Activated naive CD8-positive, alpha-beta T cell treated with anti-CD3 and anti-CD28 coated beads, Interleukin-2, amount 10 ng/mL, durations not matched to agents 7 days and 5 days (primary cell): ENCODE measurements at regions of chr7 and their contacts with region 1.

Region 1: GRCh38 chr7:149261829-149262617 is at the start of gene ZNF783:
- DNase-seq: peak; percentile 89
- ATAC-seq: peak; percentile 91
- H3K4me3 Mint-ChIP-seq: peak within 1 kb of the TSS; percentile 86
- H3K27ac Mint-ChIP-seq: peak within 1 kb of the TSS; percentile 73
- H3K4me1 Mint-ChIP-seq: peaks cover 21% of the 10 kb centered on the region
- H3K27me3 Mint-ChIP-seq: no peaks in the 10 kb centered on the region
- total RNA-seq, gene ZNF783: 22.0 to 23.7 TPM

Region 2: DNA sequence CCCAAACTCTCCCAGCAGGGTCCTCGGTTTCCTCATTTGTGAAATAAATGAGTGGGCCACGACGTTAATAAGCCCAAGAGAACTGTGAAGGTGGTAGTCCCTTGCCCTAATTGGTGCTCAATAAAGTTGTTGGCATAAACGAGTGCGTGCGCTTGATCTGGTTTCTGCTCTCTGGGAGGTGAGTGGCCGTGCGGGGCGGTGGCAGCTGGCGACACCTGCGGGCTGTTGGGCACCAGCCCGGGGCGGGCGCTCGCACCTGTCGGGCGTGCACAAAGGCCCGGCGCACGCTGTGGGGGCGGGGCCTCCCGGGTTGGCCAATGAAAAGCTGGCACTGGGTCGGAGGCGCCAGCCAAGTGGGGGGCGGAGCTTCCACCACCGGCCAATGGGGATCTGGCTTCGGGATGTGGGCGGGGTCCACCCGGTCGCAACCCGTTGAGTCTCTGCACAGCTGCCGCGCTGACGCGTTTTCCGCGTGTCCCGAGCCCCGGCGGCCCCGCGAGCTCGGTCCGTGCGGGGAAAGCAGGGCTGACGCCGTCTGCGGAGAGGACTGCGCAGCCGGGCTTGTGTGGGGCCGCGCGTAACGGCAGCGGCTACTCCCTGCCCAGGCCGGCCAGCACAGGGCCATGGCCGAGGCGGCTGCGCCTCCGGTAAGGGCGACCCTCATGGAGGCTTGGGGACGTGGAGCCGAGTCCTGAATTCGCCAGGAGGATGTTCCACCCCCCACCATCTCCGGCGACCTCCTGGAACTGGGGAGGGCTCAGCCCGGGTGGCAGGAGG is 23.0 kb after region 1 on chr7:
- POLR2A ChIA-PET with region 1: interaction called, 33 read pairs
- DNase-seq: peak; percentile 99
- ATAC-seq: peak; percentile 90
- H3K4me3 Mint-ChIP-seq: peak overlapping the region; percentile 92
- H3K27ac Mint-ChIP-seq: peak overlapping the region; percentile 65
- H3K4me1 Mint-ChIP-seq: peaks cover 31% of the 10 kb centered on the region
- H3K27me3 Mint-ChIP-seq: peaks cover 4% of the 10 kb centered on the region